Right cardiac atrium (tissue), 5 donors: ENCODE measurements at regions of chr17 and their contacts with region 1.

Region 1: GRCh38 chr17:74748529-74749365 is at the start of gene NHERF1:
- DNase-seq: peak in 2 of 3 donors; percentile 98 to 99
- ATAC-seq: peak; percentile 97
- H3K4me3 ChIP-seq: peak within 1 kb of the TSS; percentile 73
- H3K27ac ChIP-seq: peak within 1 kb of the TSS; percentile 53
- H3K4me1 ChIP-seq: peaks cover 6% of the 10 kb centered on the region
- H3K27me3 ChIP-seq: no peaks in the 10 kb centered on the region
- total RNA-seq, gene NHERF1: 6.1 to 11.6 (median 9.7) TPM

Region 2: GRCh38 chr17:74545843-74546230 is 202.9 kb before region 1 on chr17 and contains the start of gene CD300C:
- intact Hi-C with region 1: no loop called
- DNase-seq: peak; percentile 37 to 70 (median 60)
- ATAC-seq: peak; percentile 48
- H3K4me3 ChIP-seq: no peak within 1 kb of the TSS
- H3K27ac ChIP-seq: no peak within 1 kb of the TSS
- H3K4me1 ChIP-seq: no peaks in the 10 kb centered on the region
- H3K27me3 ChIP-seq: no peaks in the 10 kb centered on the region
- total RNA-seq, gene CD300C: 0.62 to 2.1 (median 1.5) TPM

Region 3: GRCh38 chr17:74770498-74771318 is 22.0 kb after region 1 on chr17:
- intact Hi-C with region 1: loop called in 1 of 4 experiments (anchors 2 kb)
- DNase-seq: peak; percentile 53 to 84 (median 81)
- ATAC-seq: peak; percentile 50 to 63
- H3K4me3 ChIP-seq: no peak overlapping the region
- H3K27ac ChIP-seq: no peak overlapping the region
- H3K4me1 ChIP-seq: peaks cover 5% of the 10 kb centered on the region
- H3K27me3 ChIP-seq: no peaks in the 10 kb centered on the region

Region 4: GRCh38 chr17:74780443-74781238 is 31.9 kb after region 1 on chr17:
- intact Hi-C with region 1: loop called in 2 of 4 experiments (anchors 5 kb)
- DNase-seq: no peak
- ATAC-seq: no peak
- H3K4me3 ChIP-seq: no peak overlapping the region
- H3K27ac ChIP-seq: no peak overlapping the region
- H3K4me1 ChIP-seq: no peaks in the 10 kb centered on the region
- H3K27me3 ChIP-seq: no peaks in the 10 kb centered on the region

Region 5: GRCh38 chr17:74864866-74865395 is 116.2 kb after region 1 on chr17:
- intact Hi-C with region 1: loop called in 2 of 4 experiments (anchors 2 to 5 kb)
- DNase-seq: peak; percentile 71 to 90 (median 89)
- ATAC-seq: peak; percentile 30 to 47
- H3K4me3 ChIP-seq: no peak overlapping the region
- H3K27ac ChIP-seq: no peak overlapping the region
- H3K4me1 ChIP-seq: peaks cover 4% of the 10 kb centered on the region
- H3K27me3 ChIP-seq: no peaks in the 10 kb centered on the region